ENCODE measurements at regions of chr12 and their contacts with region 1.

Region 1: GRCh38 chr12:6825398-6826124 is 2.6 kb upstream of the P3H3 start:
- DNase-seq: peak; percentile 71 to 90 (median 80)
- ATAC-seq: peak; percentile 65
- H3K4me3 ChIP-seq: no peak overlapping the region
- H3K4me3 Mint-ChIP-seq: peak overlapping the region; percentile 5
- H3K27ac ChIP-seq: no peak overlapping the region
- H3K27ac Mint-ChIP-seq: no peak overlapping the region
- H3K4me1 ChIP-seq: peaks cover 51% of the 10 kb centered on the region
- H3K4me1 Mint-ChIP-seq: peaks cover 26% of the 10 kb centered on the region
- H3K27me3 ChIP-seq: peaks cover 19 to 29% of the 10 kb centered on the region in 2 experiments
- H3K27me3 Mint-ChIP-seq: peaks cover 32% of the 10 kb centered on the region
- CTCF ChIP-seq: peak; percentile 94

Region 2: GRCh38 chr12:6563448-6564050 is 262.0 kb before region 1 on chr12:
- CTCF ChIA-PET with region 1: no interaction called
- POLR2A ChIA-PET with region 1: interaction called, 3 read pairs
- intact Hi-C with region 1: loop called in 1 of 2 experiments (anchors 5 kb)
- DNase-seq: peak; percentile 51 to 80 (median 60)
- ATAC-seq: no peak
- H3K4me3 ChIP-seq: no peak overlapping the region
- H3K4me3 Mint-ChIP-seq: peak overlapping the region; percentile 69
- H3K27ac ChIP-seq: no peak overlapping the region
- H3K27ac Mint-ChIP-seq: peak overlapping the region; percentile 71
- H3K4me1 ChIP-seq: peaks cover 31% of the 10 kb centered on the region
- H3K4me1 Mint-ChIP-seq: peaks cover 48% of the 10 kb centered on the region
- H3K27me3 ChIP-seq: no peaks in the 10 kb centered on the region
- H3K27me3 Mint-ChIP-seq: no peaks in the 10 kb centered on the region
- CTCF ChIP-seq: peak; percentile 87

Region 3: DNA sequence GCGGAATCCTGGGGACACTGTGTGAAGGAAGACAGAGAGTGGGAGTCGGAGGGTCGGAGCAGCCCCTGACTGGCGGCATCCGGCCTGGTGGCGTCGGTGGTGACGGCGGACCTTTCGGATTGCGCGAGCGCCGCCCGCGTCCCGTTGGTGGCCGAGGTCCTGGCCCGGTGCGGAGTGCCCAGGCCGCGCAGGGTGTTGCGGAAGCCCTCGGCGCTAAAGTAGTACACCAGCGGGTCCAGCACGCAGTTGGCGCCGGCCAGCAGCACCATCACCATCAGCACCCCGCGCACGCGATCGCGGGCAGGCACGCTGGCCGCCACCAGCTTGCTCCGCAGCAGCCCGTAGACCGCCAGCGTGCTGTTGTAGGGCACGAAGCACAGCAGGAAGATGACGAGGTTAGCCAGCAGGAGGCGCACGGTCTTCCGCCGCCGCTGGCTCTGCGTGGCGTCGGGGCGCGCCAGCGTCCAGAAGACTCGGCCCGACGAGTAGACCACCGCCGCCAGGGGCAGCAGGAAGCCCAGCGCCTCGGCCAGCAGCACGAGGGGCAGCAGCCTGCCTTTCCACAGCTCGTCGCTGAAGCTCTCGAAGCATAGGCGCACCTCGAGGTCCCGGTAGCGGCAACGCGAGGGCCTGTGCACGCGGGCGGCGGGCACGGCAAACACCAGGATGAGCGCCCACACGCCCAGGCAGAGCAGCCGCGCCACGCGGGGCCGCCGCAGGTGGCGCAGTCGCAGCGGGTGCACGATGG is 205.2 kb before region 1 on chr12:
- CTCF ChIA-PET with region 1: no interaction called
- POLR2A ChIA-PET with region 1: no interaction called
- intact Hi-C with region 1: loop called (anchors 1 to 2 kb)
- DNase-seq: peak in 12 of 14 experiments; percentile 26 to 85 (median 50)
- ATAC-seq: peak; percentile 75
- H3K4me3 ChIP-seq: peak overlapping the region; percentile 17
- H3K4me3 Mint-ChIP-seq: peak overlapping the region; percentile 70
- H3K27ac ChIP-seq: peak overlapping the region in 1 of 2 donors; percentile 21
- H3K27ac Mint-ChIP-seq: peak overlapping the region; percentile 65
- H3K4me1 ChIP-seq: peaks cover 13% of the 10 kb centered on the region
- H3K4me1 Mint-ChIP-seq: peaks cover 15% of the 10 kb centered on the region
- H3K27me3 ChIP-seq: no peaks in the 10 kb centered on the region
- H3K27me3 Mint-ChIP-seq: no peaks in the 10 kb centered on the region
- CTCF ChIP-seq: peak; percentile 75

Region 4: GRCh38 chr12:6778574-6779550 is 46.7 kb before region 1 on chr12:
- CTCF ChIA-PET with region 1: no interaction called
- POLR2A ChIA-PET with region 1: interaction called, 3 read pairs
- intact Hi-C with region 1: loop called in 1 of 2 experiments (anchors 1 kb)
- DNase-seq: peak; percentile 80 to 93 (median 83)
- ATAC-seq: peak; percentile 84
- H3K4me3 ChIP-seq: peak overlapping the region; percentile 59
- H3K4me3 Mint-ChIP-seq: peak overlapping the region; percentile 85
- H3K27ac ChIP-seq: peak overlapping the region in 1 of 2 donors; percentile 24
- H3K27ac Mint-ChIP-seq: peak overlapping the region; percentile 77
- H3K4me1 ChIP-seq: peaks cover 70% of the 10 kb centered on the region
- H3K4me1 Mint-ChIP-seq: peaks cover 59% of the 10 kb centered on the region
- H3K27me3 ChIP-seq: peaks cover 0 to 8% of the 10 kb centered on the region in 2 experiments
- H3K27me3 Mint-ChIP-seq: peaks cover 19% of the 10 kb centered on the region
- CTCF ChIP-seq: peak; percentile 94

Region 5: DNA sequence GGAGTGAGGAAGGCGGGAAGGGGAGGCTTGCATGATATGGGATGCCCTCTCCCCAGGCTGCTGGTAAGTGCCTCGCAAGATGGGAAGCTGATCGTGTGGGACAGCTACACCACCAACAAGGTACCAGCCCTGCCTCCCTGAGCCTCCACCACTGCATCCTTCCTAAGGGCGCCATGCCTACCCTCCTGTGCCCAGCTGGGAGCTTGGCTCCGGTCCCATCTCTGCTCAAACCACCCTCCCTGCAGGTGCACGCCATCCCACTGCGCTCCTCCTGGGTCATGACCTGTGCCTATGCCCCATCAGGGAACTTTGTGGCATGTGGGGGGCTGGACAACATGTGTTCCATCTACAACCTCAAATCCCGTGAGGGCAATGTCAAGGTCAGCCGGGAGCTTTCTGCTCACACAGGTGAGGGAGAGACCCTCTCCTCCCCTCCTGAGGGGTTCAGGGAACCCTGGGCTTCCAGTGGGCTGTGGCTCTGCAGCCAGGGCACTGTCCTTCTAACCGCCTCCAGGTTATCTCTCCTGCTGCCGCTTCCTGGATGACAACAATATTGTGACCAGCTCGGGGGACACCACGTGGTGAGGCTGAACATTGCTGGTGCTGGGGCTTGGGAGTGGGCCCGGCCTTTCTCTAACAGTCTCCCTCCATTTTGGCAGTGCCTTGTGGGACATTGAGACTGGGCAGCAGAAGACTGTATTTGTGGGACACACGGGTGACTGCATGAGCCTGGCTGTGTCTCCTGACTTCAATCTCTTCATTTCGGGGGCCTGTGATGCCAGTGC is 17.7 kb after region 1 on chr12:
- CTCF ChIA-PET with region 1: no interaction called
- POLR2A ChIA-PET with region 1: no interaction called
- intact Hi-C with region 1: no loop called
- DNase-seq: no peak
- ATAC-seq: no peak
- H3K4me3 ChIP-seq: no peak overlapping the region
- H3K4me3 Mint-ChIP-seq: no peak overlapping the region
- H3K27ac ChIP-seq: no peak overlapping the region
- H3K27ac Mint-ChIP-seq: no peak overlapping the region
- H3K4me1 ChIP-seq: no peaks in the 10 kb centered on the region
- H3K4me1 Mint-ChIP-seq: no peaks in the 10 kb centered on the region
- H3K27me3 ChIP-seq: no peaks in the 10 kb centered on the region
- H3K27me3 Mint-ChIP-seq: no peaks in the 10 kb centered on the region
- CTCF ChIP-seq: no peak

Region 6: DNA sequence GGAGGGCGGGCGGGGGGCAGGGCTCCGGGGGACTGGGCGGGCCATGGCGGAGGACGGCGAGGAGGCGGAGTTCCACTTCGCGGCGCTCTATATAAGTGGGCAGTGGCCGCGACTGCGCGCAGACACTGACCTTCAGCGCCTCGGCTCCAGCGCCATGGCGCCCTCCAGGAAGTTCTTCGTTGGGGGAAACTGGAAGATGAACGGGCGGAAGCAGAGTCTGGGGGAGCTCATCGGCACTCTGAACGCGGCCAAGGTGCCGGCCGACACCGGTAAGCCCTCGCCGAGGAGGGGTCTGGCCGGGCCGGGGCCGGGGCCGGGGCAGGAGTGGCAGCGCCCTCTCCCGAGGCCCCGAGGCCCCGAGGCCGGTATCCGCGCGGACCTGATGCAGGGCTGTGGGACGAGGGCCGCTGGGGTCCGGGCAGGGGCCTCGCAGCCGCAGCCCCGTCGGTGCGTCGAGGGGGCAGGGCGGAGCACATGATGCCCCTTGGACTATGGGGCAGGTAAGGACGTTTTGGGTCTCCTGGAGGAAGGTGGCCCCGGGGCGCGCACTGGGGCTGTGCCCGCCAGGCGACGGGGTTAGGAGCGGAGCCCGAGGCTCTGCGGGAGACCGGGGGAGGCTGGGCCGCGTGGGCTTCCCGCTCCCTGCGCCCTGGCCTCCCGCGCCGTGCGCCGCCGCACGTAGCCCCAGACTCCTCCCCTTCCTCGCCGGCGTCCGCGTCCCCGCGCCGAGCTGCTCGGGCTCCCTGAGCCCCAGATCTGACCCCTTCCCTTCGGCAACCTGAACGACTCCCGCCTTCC is 42.1 kb after region 1 on chr12 and contains the start of gene TPI1:
- CTCF ChIA-PET with region 1: interaction called, 10 read pairs
- POLR2A ChIA-PET with region 1: interaction called, 10 read pairs
- intact Hi-C with region 1: no loop called
- DNase-seq: peak; percentile 55 to 88 (median 72)
- ATAC-seq: peak; percentile 64
- H3K4me3 ChIP-seq: peak within 1 kb of the TSS; percentile 68
- H3K4me3 Mint-ChIP-seq: peak within 1 kb of the TSS; percentile 94
- H3K27ac ChIP-seq: peak within 1 kb of the TSS; percentile 73 to 78
- H3K27ac Mint-ChIP-seq: peak within 1 kb of the TSS; percentile 80
- H3K4me1 ChIP-seq: peaks cover 53% of the 10 kb centered on the region
- H3K4me1 Mint-ChIP-seq: peaks cover 56% of the 10 kb centered on the region
- H3K27me3 ChIP-seq: no peaks in the 10 kb centered on the region
- H3K27me3 Mint-ChIP-seq: no peaks in the 10 kb centered on the region
- CTCF ChIP-seq: no peak
- total RNA-seq, gene TPI1: 46.8 to 48.7 TPM

Measured in CD4-positive, alpha-beta T cell (primary cell).